Head of caudate nucleus (tissue), 42 donors: ENCODE measurements at regions of chr2 and their contacts with region 1.

Region 1: GRCh38 chr2:30711646-30712085 is 95.6 kb downstream of the CAPN13 start:
- DNase-seq: peak; percentile 31 to 92 (median 82)

Region 2: GRCh38 chr2:30164131-30164925 is 547.3 kb before region 1 on chr2:
- intact Hi-C with region 1: loop called (anchors 5 kb)
- DNase-seq: no peak

Region 3: GRCh38 chr2:30862054-30862651 is 150.5 kb after region 1 on chr2:
- intact Hi-C with region 1: loop called (anchors 5 kb)
- DNase-seq: peak; percentile 44 to 89 (median 74)

Region 4: DNA sequence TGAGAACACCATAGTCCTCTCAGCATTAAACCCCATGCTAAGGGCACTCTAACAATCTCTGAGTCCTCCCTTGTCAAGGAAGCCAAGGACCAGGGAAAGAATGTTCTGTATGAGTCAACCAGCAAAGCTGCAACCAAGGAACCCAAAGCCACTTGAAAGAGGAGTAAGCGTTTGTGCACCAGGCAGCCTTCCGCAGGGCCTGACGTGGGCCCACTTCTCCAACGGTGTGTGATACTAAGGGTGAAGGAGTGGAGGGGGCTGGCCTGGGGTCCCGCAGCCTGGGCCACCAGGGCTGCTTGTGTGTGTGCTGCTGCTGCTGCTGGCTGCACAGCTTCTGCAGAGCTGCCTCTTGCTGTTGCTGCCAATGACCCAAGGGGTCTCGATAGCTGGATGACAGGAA is 456.6 kb after region 1 on chr2:
- intact Hi-C with region 1: loop called (anchors 5 kb)
- DNase-seq: no peak

Region 5: DNA sequence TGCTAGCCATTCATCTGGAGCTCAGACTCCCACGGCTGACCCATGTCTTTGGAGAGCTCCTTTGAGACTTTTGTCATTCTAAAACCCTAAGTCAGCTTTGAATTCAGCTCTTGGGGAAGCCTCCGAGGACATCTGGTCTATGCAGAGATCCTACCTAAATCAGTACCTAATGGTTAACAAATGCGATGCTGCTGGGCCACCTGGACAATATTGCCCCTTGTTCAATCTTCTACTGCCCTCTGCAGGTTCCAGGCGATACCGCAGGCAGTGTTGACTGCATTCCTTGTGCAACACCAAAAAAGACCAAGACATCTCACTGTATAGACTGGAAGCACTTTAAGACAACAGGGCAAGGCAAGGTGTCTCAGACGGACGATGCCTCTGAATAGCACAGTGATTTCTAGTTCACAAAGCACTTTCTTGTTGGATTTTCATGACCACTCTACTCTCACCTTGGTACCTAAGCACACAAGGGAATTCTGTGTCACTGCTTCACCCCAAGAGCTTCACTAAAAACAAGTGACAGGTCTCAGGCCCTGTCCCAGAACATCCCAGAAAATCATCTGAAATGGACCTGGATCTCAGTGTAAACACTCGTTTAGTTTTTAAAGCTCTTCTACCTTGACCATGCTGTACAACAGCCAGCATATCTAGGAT is 622.0 kb after region 1 on chr2:
- intact Hi-C with region 1: loop called (anchors 10 kb)
- DNase-seq: peak; percentile 52 to 94 (median 86)